CD14-positive monocyte (primary cell): ENCODE measurements at regions of chr5 and their contacts with region 1.

Region 1: GRCh38 chr5:120260651-120261050 is 203.4 kb upstream of the PRR16 start:
- DNase-seq: no peak
- H3K4me3 ChIP-seq: no peak overlapping the region
- H3K4me3 Mint-ChIP-seq: no peak overlapping the region
- H3K27ac ChIP-seq: no peak overlapping the region
- H3K27ac Mint-ChIP-seq: no peak overlapping the region
- H3K4me1 ChIP-seq: peaks cover 9 to 15% of the 10 kb centered on the region in 2 donors
- H3K4me1 Mint-ChIP-seq: peaks cover 25% of the 10 kb centered on the region
- H3K27me3 ChIP-seq: no peaks in the 10 kb centered on the region
- H3K27me3 Mint-ChIP-seq: peaks cover 0 to 2% (median 2%) of the 10 kb centered on the region in 3 donors
- CTCF ChIP-seq: no peak

Region 2: DNA sequence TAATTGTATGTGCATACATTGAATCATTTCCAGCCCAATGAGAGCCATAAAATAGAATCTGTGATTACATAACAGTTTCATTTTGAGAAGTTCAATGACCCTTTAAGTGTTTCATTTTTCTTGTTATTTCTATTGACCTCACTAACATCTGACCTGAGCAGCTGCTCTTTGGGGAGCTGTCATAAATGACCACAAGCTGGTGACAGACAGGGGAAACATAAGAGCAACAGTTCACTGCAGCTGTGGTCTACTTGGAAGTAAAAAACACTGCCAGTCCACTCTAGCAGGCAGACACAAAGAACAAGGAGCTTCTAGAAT is 1537.7 kb before region 1 on chr5:
- intact Hi-C with region 1: no loop called
- DNase-seq: no peak
- H3K4me3 ChIP-seq: no peak overlapping the region
- H3K4me3 Mint-ChIP-seq: no peak overlapping the region
- H3K27ac ChIP-seq: no peak overlapping the region
- H3K27ac Mint-ChIP-seq: no peak overlapping the region
- H3K4me1 ChIP-seq: no peaks in the 10 kb centered on the region
- H3K4me1 Mint-ChIP-seq: no peaks in the 10 kb centered on the region
- H3K27me3 ChIP-seq: no peaks in the 10 kb centered on the region
- H3K27me3 Mint-ChIP-seq: no peaks in the 10 kb centered on the region
- CTCF ChIP-seq: no peak

Region 3: DNA sequence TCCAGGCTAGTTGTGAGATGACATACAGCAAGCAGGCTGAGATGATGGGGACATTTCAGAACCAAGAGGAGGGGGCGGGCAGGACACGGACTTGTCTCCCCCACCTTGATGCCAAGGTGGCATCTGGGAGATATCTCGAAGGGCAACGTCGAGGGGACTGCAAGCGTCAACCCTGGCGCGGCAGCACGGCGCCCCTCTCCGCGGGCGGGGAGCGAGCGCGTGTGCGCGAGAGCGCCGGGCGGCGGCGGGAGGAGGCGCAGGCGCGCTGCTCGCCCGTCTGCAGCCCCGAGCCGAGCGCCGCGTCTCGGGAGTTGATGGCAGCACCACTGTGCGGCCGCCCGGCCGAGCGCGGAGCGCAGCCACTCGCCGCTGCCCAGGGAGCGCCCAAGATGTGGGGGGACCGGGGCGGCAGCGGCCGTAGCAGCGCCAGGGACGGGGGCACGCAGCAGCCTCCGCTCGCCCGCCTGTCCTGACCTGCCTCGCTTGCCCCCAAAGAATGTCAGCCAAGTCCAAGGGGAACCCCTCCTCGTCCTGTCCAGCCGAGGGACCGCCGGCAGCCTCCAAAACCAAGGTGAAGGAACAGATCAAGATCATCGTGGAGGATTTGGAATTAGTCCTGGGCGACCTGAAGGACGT is 203.5 kb after region 1 on chr5 and contains the start of gene PRR16:
- intact Hi-C with region 1: loop called in 1 of 2 experiments (anchors 10 kb)
- DNase-seq: peak; percentile 29 to 47 (median 46)
- H3K4me3 ChIP-seq: peak within 1 kb of the TSS; percentile 44 to 79 (median 65)
- H3K4me3 Mint-ChIP-seq: peak within 1 kb of the TSS; percentile 90 to 99
- H3K27ac ChIP-seq: peak within 1 kb of the TSS in 1 of 2 donors; percentile 60
- H3K27ac Mint-ChIP-seq: peak within 1 kb of the TSS; percentile 54 to 82 (median 69)
- H3K4me1 ChIP-seq: peaks cover 29 to 33% of the 10 kb centered on the region in 2 donors
- H3K4me1 Mint-ChIP-seq: peaks cover 32% of the 10 kb centered on the region
- H3K27me3 ChIP-seq: peaks cover 18 to 28% of the 10 kb centered on the region in 2 donors
- H3K27me3 Mint-ChIP-seq: peaks cover 25 to 33% (median 27%) of the 10 kb centered on the region in 3 donors
- CTCF ChIP-seq: peak; percentile 35
- polyA plus RNA-seq, gene PRR16: 0.14 to 0.74 (median 0.56) TPM

Region 4: GRCh38 chr5:120999550-120999949 is 738.9 kb after region 1 on chr5:
- intact Hi-C with region 1: no loop called
- DNase-seq: no peak
- H3K4me3 ChIP-seq: no peak overlapping the region
- H3K4me3 Mint-ChIP-seq: no peak overlapping the region
- H3K27ac ChIP-seq: no peak overlapping the region
- H3K27ac Mint-ChIP-seq: no peak overlapping the region
- H3K4me1 ChIP-seq: no peaks in the 10 kb centered on the region
- H3K4me1 Mint-ChIP-seq: no peaks in the 10 kb centered on the region
- H3K27me3 ChIP-seq: no peaks in the 10 kb centered on the region
- H3K27me3 Mint-ChIP-seq: no peaks in the 10 kb centered on the region
- CTCF ChIP-seq: no peak